ENCODE measurements at regions of chr1 and their contacts with region 1.

Region 1: GRCh38 chr1:28470146-28470545 is 35.7 kb upstream of the RCC1 start:
- DNase-seq: no peak
- H3K4me3 ChIP-seq: no peak overlapping the region
- H3K27ac ChIP-seq: no peak overlapping the region
- H3K4me1 ChIP-seq: no peaks in the 10 kb centered on the region
- H3K27me3 ChIP-seq: no peaks in the 10 kb centered on the region
- CTCF ChIP-seq: no peak
- POLR2A ChIP-seq: no peak

Region 2: GRCh38 chr1:28409090-28409489 is 61.1 kb before region 1 on chr1:
- intact Hi-C with region 1: loop called (anchors 10 kb)
- DNase-seq: no peak
- H3K4me3 ChIP-seq: no peak overlapping the region
- H3K27ac ChIP-seq: no peak overlapping the region
- H3K4me1 ChIP-seq: peaks cover 0 to 17% (median 0%) of the 10 kb centered on the region in 6 donors
- H3K27me3 ChIP-seq: no peaks in the 10 kb centered on the region
- CTCF ChIP-seq: no peak
- POLR2A ChIP-seq: no peak